Transverse colon (tissue), 4 donors: ENCODE measurements at regions of chr6 and their contacts with region 1.

Region 1: DNA sequence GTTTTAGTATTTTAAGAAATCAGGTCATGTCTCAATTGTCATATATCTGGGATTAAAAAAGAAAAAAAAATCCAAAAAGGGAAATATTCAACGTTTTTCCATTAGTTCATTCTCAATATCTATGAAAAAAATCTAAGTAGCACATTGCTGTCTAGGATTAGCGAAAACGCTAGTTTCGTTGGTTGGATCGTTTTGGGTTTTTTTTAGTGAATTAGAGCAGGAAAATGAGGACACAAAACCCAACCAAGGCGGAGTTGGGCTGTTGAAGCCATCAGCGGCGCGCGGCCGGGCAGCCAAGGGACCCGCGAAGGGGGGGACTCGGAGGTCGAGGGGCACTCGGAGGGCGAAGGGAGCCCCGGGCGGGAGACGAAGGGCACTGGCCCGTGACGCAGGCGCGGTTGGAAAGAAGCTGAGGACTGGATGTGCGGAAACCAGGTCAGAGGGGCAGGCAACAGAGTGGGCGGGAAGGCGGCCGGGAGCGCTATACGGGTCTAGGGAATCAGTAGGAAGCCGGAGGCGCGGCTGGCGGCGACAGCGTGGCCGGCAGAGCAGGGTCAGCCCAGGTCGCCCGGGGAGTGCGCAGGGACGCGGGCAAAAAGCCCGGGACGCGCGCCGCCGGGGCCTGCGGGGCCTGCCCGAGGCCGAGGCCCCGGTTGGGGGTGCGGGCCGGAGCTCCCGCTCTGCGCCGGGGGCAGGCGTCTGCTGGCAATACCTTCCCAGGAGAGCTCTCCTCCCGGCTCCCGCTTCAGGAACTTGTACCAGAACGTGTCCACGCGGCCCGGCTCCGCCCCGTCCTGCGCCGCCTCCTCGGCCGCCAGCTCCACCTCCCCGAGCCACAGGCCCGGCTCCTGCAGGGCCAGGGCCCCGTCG is 599 bp downstream of the EPM2A start:
- DNase-seq: peak; percentile 90
- H3K4me3 ChIP-seq: peak overlapping the region; percentile 68 to 98 (median 79)
- H3K27ac ChIP-seq: peak overlapping the region; percentile 95 to 100 (median 97)
- H3K4me1 ChIP-seq: peaks cover 0 to 31% (median 7%) of the 10 kb centered on the region in 4 donors
- H3K27me3 ChIP-seq: no peaks in the 10 kb centered on the region
- CTCF ChIP-seq: no peak
- EP300 ChIP-seq: no peak
- POLR2A ChIP-seq: peak; percentile 61

Region 2: DNA sequence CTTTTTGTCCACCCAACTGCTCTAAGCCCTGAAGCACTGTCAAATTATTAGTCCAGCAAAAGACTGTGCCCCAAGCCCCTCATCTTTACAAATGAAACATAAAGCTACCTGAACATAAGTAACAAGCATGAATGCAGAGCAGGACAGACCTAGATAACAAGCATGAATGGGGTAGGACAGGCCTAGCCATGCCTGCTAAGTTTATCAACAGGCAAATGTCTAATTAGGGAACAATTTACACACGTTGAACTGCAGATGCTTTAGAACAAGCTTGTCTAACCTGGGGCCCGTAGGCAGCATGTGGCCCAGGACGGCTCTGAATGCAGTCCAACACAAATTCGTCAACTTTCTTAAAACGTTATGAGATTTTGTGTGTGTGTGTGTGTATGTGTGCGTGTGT is 66.3 kb after region 1 on chr6:
- in situ Hi-C with region 1: no loop called
- intact Hi-C with region 1: loop called (anchors 5 kb)
- DNase-seq: no peak
- H3K4me3 ChIP-seq: no peak overlapping the region
- H3K27ac ChIP-seq: no peak overlapping the region
- H3K4me1 ChIP-seq: no peaks in the 10 kb centered on the region
- H3K27me3 ChIP-seq: no peaks in the 10 kb centered on the region
- CTCF ChIP-seq: no peak
- EP300 ChIP-seq: no peak
- POLR2A ChIP-seq: no peak

Region 3: DNA sequence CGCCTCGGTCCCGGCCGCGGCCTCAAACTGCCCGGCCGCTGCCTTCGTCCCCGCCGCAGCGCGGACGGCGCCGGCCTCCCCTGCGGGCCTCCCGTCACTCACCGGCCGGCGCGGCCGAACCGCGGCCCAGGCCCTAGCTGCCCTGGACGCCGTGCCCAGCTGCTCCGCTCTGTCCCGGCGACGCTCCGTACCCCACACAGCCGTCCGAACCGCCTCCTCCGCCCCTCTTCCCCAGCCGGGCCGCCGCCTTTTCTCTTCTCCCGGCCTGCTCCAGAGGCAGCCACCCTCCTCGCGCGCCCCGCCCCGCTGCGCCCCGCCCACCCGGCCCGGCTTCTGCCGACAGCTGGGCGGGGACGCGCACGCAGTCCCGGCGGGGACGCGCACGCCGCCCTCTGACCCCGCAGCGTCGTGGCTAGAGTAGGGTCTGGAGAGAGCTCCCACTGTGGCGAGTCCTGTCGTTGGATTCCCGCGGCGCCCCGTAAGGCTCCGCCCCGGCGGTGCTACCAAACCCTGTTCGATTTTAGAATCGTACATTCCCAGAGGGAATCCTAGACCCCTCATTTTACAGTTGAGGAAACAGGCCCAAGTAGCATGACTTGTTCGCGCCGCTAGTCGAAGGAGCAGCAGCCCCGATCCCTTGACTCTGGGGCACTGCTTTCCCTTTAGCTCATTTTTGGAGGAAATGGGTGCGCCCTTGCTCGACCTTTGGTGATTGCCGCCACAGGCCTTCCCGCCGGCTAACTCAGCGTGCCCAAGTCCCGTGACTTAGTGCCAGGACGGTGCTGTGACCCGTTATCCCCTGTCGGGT is 80.0 kb after region 1 on chr6 and contains the start of gene FBXO30:
- in situ Hi-C with region 1: loop called in 2 of 4 experiments (anchors 10 kb)
- intact Hi-C with region 1: no loop called
- DNase-seq: peak; percentile 89
- H3K4me3 ChIP-seq: peak within 1 kb of the TSS; percentile 67 to 95 (median 80)
- H3K27ac ChIP-seq: peak within 1 kb of the TSS; percentile 95 to 99 (median 97)
- H3K4me1 ChIP-seq: peaks cover 0 to 46% (median 19%) of the 10 kb centered on the region in 4 donors
- H3K27me3 ChIP-seq: no peaks in the 10 kb centered on the region
- CTCF ChIP-seq: peak in 4 of 5 experiments; percentile 22 to 66 (median 52)
- EP300 ChIP-seq: no peak
- POLR2A ChIP-seq: peak; percentile 69
- total RNA-seq, gene FBXO30: 6.0 to 13.0 (median 9.2) TPM

Region 4: GRCh38 chr6:145836170-145836569 is 101.4 kb after region 1 on chr6:
- in situ Hi-C with region 1: no loop called
- intact Hi-C with region 1: no loop called
- DNase-seq: no peak
- H3K4me3 ChIP-seq: no peak overlapping the region
- H3K27ac ChIP-seq: no peak overlapping the region
- H3K4me1 ChIP-seq: no peaks in the 10 kb centered on the region
- H3K27me3 ChIP-seq: no peaks in the 10 kb centered on the region
- CTCF ChIP-seq: no peak
- EP300 ChIP-seq: no peak
- POLR2A ChIP-seq: no peak

Region 5: GRCh38 chr6:145887969-145888368 is 153.2 kb after region 1 on chr6:
- in situ Hi-C with region 1: loop called in 1 of 4 experiments (anchors 25 kb)
- intact Hi-C with region 1: no loop called
- DNase-seq: no peak
- H3K4me3 ChIP-seq: no peak overlapping the region
- H3K27ac ChIP-seq: peak overlapping the region in 1 of 4 donors; percentile 33
- H3K4me1 ChIP-seq: peaks cover 0 to 12% (median 0%) of the 10 kb centered on the region in 4 donors
- H3K27me3 ChIP-seq: no peaks in the 10 kb centered on the region
- CTCF ChIP-seq: peak; percentile 24 to 36 (median 34)
- EP300 ChIP-seq: no peak
- POLR2A ChIP-seq: no peak

Region 6: GRCh38 chr6:146077992-146078391 is 343.3 kb after region 1 on chr6:
- in situ Hi-C with region 1: no loop called
- intact Hi-C with region 1: no loop called
- DNase-seq: no peak
- H3K4me3 ChIP-seq: no peak overlapping the region
- H3K27ac ChIP-seq: no peak overlapping the region
- H3K4me1 ChIP-seq: no peaks in the 10 kb centered on the region
- H3K27me3 ChIP-seq: no peaks in the 10 kb centered on the region
- CTCF ChIP-seq: no peak
- EP300 ChIP-seq: no peak
- POLR2A ChIP-seq: no peak